ENCODE measurements at regions of chr18 and their contacts with region 1.

Region 1: GRCh38 chr18:57427429-57428181 is 7.6 kb upstream of the ONECUT2 start:
- DNase-seq: no peak
- H3K4me3 Mint-ChIP-seq: no peak overlapping the region
- H3K27ac Mint-ChIP-seq: no peak overlapping the region
- H3K4me1 Mint-ChIP-seq: peaks cover 15% of the 10 kb centered on the region
- H3K27me3 Mint-ChIP-seq: peaks cover 65% of the 10 kb centered on the region

Region 2: DNA sequence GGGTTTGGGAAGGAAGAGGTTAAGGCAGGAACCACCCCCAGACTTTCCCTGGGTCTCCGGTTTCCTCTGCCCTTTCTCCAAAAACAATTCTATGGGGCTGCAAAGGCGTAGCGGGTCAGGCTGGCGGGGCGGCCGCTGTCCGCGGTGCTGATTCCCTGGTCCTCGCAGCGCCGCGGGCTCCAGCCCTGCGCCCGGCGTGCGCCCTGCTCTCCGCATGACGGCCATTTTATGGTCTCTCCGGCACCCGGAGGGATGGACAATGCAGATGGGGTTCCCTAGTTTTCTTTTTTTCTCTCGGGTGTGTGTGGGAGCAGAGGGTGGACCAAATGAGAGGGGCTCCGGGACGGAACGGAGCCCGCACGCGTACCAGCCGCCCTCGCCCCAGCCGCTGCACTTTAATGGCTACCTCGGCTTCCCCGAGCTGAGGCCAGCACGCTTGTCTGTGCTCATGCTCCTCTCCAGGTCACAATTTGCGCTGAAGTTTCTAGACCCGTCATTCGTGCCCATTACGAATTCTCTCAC is 73.6 kb before region 1 on chr18:
- CTCF ChIA-PET with region 1: no interaction called
- intact Hi-C with region 1: loop called (anchors 2 kb)
- DNase-seq: peak; percentile 32
- H3K4me3 Mint-ChIP-seq: no peak overlapping the region
- H3K27ac Mint-ChIP-seq: no peak overlapping the region
- H3K4me1 Mint-ChIP-seq: peaks cover 5% of the 10 kb centered on the region
- H3K27me3 Mint-ChIP-seq: peaks cover 52% of the 10 kb centered on the region

Region 3: GRCh38 chr18:57921708-57922107 is 494.1 kb after region 1 on chr18:
- CTCF ChIA-PET with region 1: no interaction called
- intact Hi-C with region 1: no loop called
- DNase-seq: peak; percentile 63
- H3K4me3 Mint-ChIP-seq: no peak overlapping the region
- H3K27ac Mint-ChIP-seq: no peak overlapping the region
- H3K4me1 Mint-ChIP-seq: no peaks in the 10 kb centered on the region
- H3K27me3 Mint-ChIP-seq: peaks cover 15% of the 10 kb centered on the region